ENCODE measurements at regions of chr16 and their contacts with region 1.

Region 1: DNA sequence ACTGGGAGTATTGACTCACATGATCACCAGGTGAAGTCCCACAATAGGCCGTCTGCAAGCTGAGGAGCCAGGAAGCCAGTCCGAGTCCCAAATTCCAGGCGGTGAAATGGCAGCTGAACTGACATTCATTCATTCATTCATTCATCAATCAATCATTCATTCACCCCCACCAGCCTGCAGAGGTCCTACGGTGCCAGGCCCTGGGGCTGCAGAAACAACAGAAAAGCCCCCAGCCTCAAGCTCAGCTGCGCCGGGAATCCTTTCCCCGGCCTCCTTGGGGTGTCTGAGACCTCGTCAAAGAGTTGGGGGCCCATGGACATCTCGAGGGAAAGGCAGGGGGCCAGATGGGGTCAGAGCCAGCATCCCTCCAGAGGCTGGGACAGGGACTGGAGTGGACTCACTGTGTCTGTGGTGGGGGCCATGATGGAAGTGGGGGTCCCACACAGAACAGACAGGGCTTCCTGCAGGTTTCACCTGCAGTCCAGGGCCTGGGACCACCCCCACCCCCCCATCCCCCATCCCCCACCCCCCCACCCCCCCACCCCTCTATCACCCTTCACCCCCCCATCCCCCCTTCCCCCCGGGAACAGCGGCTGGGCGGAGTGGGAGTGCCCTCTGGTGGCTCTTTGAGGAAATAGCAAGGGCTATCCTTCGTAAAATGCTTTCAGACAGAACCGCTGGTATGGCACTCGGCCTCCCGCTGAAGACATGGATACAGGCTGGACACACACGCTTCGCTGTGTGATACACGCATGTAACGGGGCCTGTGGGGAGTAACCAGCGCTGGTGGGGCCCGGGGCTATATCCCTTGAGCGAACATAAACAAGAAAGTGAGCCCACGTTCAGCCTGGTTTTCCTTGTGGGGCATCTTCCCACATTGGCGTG is 8.5 kb upstream of the ZC3H18 start:
- DNase-seq: peak; percentile 26 to 76 (median 60)
- ATAC-seq: peak; percentile 87
- H3K4me3 ChIP-seq: no peak overlapping the region
- H3K4me3 Mint-ChIP-seq: no peak overlapping the region
- H3K27ac ChIP-seq: no peak overlapping the region
- H3K27ac Mint-ChIP-seq: no peak overlapping the region
- H3K4me1 ChIP-seq: peaks cover 4% of the 10 kb centered on the region
- H3K4me1 Mint-ChIP-seq: peaks cover 6% of the 10 kb centered on the region
- H3K27me3 ChIP-seq: no peaks in the 10 kb centered on the region
- H3K27me3 Mint-ChIP-seq: no peaks in the 10 kb centered on the region
- CTCF ChIP-seq: peak; percentile 45

Region 2: DNA sequence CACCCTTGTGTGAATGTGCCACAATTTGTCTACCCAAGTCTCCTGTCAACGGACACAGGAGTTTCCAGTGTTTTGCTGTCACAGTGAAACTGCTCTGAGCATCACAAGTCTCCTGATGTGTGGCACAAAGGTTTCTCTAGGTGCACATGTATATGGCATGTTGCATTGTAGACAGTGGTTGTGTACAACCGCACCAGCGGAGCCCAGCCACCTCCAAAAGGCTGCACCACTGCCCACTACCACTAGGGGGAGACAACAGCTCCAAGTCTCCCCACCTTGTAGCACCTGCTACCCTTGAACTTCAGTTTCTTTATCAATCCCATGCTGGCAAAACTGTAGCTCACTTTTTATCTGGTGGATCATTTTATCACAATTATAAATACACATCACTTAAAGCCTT is 274.5 kb before region 1 on chr16:
- CTCF ChIA-PET with region 1: no interaction called
- POLR2A ChIA-PET with region 1: no interaction called
- intact Hi-C with region 1: loop called in 1 of 2 experiments (anchors 5 kb)
- DNase-seq: peak in 1 of 9 experiments; percentile 43
- ATAC-seq: peak; percentile 51
- H3K4me3 ChIP-seq: no peak overlapping the region
- H3K4me3 Mint-ChIP-seq: no peak overlapping the region
- H3K27ac ChIP-seq: no peak overlapping the region
- H3K27ac Mint-ChIP-seq: no peak overlapping the region
- H3K4me1 ChIP-seq: no peaks in the 10 kb centered on the region
- H3K4me1 Mint-ChIP-seq: peaks cover 1% of the 10 kb centered on the region
- H3K27me3 ChIP-seq: no peaks in the 10 kb centered on the region
- H3K27me3 Mint-ChIP-seq: peaks cover 4% of the 10 kb centered on the region
- CTCF ChIP-seq: peak; percentile 58

Region 3: GRCh38 chr16:88437373-88437964 is 124.3 kb before region 1 on chr16:
- CTCF ChIA-PET with region 1: interaction called, 15 read pairs
- POLR2A ChIA-PET with region 1: no interaction called
- intact Hi-C with region 1: no loop called
- DNase-seq: peak in 8 of 9 experiments; percentile 50 to 79 (median 70)
- ATAC-seq: peak; percentile 94
- H3K4me3 ChIP-seq: no peak overlapping the region
- H3K4me3 Mint-ChIP-seq: no peak overlapping the region
- H3K27ac ChIP-seq: no peak overlapping the region
- H3K27ac Mint-ChIP-seq: no peak overlapping the region
- H3K4me1 ChIP-seq: no peaks in the 10 kb centered on the region
- H3K4me1 Mint-ChIP-seq: no peaks in the 10 kb centered on the region
- H3K27me3 ChIP-seq: no peaks in the 10 kb centered on the region
- H3K27me3 Mint-ChIP-seq: no peaks in the 10 kb centered on the region
- CTCF ChIP-seq: peak; percentile 73

Region 4: DNA sequence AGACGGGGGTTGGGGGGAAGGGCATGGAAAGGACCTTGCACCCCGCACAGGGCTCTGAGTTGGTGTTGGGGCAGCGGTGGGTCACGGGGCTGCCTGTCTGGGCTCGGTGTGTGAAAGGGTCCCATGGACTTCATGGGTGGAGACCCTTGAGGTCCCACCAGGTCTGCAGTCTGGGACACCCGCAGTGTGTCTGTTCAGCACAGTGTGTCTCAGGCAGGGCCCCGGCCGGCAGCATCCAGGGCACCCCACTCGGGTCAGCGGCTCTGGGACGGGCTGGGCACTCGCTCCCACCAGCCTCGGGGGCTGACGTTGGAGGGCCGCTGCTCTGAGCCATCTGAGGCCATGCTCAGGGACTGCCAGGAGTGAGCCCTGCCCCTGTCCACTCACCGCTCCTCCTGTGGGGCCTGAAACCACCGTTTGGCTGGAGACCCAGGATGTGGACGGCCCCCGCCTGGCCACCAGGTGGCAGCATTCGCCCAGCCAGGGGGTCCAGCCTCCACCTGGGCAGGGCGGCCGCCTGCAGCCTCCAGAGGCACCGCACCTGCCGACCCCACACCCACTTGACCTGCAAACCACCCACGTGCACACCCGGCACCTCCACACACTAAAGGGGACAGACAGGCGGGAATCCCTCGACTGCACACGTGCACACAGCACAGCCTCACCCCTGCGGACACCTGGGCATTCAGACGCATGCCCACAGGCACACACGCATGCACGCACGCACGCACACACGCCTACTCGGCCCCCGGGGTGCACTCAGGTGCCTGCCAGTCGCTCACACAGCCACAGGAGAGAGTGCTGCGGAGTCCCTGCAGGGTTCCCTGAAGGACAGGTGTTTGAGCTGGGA is 118.8 kb before region 1 on chr16:
- CTCF ChIA-PET with region 1: interaction called, 52 read pairs
- POLR2A ChIA-PET with region 1: no interaction called
- intact Hi-C with region 1: loop called (anchors 1 kb)
- DNase-seq: peak; percentile 66 to 91 (median 80)
- ATAC-seq: peak; percentile 89
- H3K4me3 ChIP-seq: no peak overlapping the region
- H3K4me3 Mint-ChIP-seq: no peak overlapping the region
- H3K27ac ChIP-seq: no peak overlapping the region
- H3K27ac Mint-ChIP-seq: no peak overlapping the region
- H3K4me1 ChIP-seq: peaks cover 8% of the 10 kb centered on the region
- H3K4me1 Mint-ChIP-seq: peaks cover 4% of the 10 kb centered on the region
- H3K27me3 ChIP-seq: no peaks in the 10 kb centered on the region
- H3K27me3 Mint-ChIP-seq: no peaks in the 10 kb centered on the region
- CTCF ChIP-seq: peak; percentile 92

Region 5: GRCh38 chr16:88527186-88527936 is 34.4 kb before region 1 on chr16:
- CTCF ChIA-PET with region 1: interaction called, 3 read pairs
- POLR2A ChIA-PET with region 1: no interaction called
- intact Hi-C with region 1: loop called (anchors 2 to 5 kb)
- DNase-seq: peak; percentile 41 to 81 (median 60)
- ATAC-seq: peak; percentile 54
- H3K4me3 ChIP-seq: no peak overlapping the region
- H3K4me3 Mint-ChIP-seq: no peak overlapping the region
- H3K27ac ChIP-seq: no peak overlapping the region
- H3K27ac Mint-ChIP-seq: no peak overlapping the region
- H3K4me1 ChIP-seq: no peaks in the 10 kb centered on the region
- H3K4me1 Mint-ChIP-seq: peaks cover 6% of the 10 kb centered on the region
- H3K27me3 ChIP-seq: no peaks in the 10 kb centered on the region
- H3K27me3 Mint-ChIP-seq: no peaks in the 10 kb centered on the region
- CTCF ChIP-seq: peak; percentile 83

Region 6: DNA sequence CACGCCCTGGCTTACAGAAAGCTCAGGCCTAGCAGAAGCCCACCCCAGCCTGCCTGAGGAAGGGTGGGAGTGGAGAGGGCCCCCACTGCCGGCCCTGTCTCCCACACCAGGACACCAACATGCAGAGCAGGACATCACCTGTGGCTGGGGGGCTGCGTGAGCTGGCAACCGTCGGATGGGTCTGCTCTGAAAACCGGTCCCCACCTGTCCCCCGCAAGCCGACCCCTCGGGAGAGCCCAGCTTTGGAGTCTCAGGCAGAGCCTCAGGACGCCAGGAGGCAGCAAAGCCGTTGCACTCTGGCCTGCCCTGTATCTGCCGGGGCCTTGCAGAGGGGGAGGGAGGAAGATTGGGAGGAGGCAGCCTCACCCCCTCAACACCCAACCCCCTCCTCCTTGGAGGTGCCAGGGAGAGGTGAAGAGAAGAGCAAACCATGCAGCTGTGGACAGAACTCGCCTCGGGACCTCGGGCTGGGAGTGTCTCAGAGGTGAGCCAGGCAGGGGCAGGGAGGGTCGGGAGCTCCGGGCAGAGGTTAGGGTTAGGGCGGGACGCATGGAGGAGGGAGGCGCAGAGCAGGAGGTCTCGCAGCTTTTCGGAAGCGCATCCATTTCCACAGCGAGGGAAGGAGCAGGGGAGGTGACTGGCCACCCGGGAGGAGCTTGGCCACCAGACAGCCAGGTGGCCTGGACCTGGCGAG is 21.9 kb before region 1 on chr16:
- CTCF ChIA-PET with region 1: interaction called, 15 read pairs
- POLR2A ChIA-PET with region 1: no interaction called
- intact Hi-C with region 1: no loop called
- DNase-seq: peak in 3 of 9 experiments; percentile 7 to 50 (median 19)
- ATAC-seq: no peak
- H3K4me3 ChIP-seq: peak overlapping the region in 1 of 2 experiments; percentile 39
- H3K4me3 Mint-ChIP-seq: no peak overlapping the region
- H3K27ac ChIP-seq: no peak overlapping the region
- H3K27ac Mint-ChIP-seq: no peak overlapping the region
- H3K4me1 ChIP-seq: peaks cover 7% of the 10 kb centered on the region
- H3K4me1 Mint-ChIP-seq: peaks cover 13% of the 10 kb centered on the region
- H3K27me3 ChIP-seq: peaks cover 0 to 5% of the 10 kb centered on the region in 2 experiments
- H3K27me3 Mint-ChIP-seq: no peaks in the 10 kb centered on the region
- CTCF ChIP-seq: no peak

Region 7: GRCh38 chr16:88599092-88599733 is 37.5 kb after region 1 on chr16:
- CTCF ChIA-PET with region 1: no interaction called
- POLR2A ChIA-PET with region 1: no interaction called
- intact Hi-C with region 1: no loop called
- DNase-seq: no peak
- ATAC-seq: no peak
- H3K4me3 ChIP-seq: no peak overlapping the region
- H3K4me3 Mint-ChIP-seq: no peak overlapping the region
- H3K27ac ChIP-seq: no peak overlapping the region
- H3K27ac Mint-ChIP-seq: no peak overlapping the region
- H3K4me1 ChIP-seq: no peaks in the 10 kb centered on the region
- H3K4me1 Mint-ChIP-seq: peaks cover 6% of the 10 kb centered on the region
- H3K27me3 ChIP-seq: no peaks in the 10 kb centered on the region
- H3K27me3 Mint-ChIP-seq: no peaks in the 10 kb centered on the region
- CTCF ChIP-seq: no peak